A673 (cell line): ENCODE measurements at regions of chr19 and their contacts with region 1.

Region 1: GRCh38 chr19:45692187-45693105 is at the start of gene QPCTL:
- DNase-seq: peak; percentile 100
- H3K4me3 ChIP-seq: peak within 1 kb of the TSS; percentile 63
- H3K27ac ChIP-seq: peak within 1 kb of the TSS; percentile 88
- H3K4me1 ChIP-seq: peaks cover 9% of the 10 kb centered on the region
- H3K27me3 ChIP-seq: no peaks in the 10 kb centered on the region
- CTCF ChIP-seq: no peak
- total RNA-seq, gene QPCTL: 12.8 and 17.4 TPM in 2 replicates

Region 2: DNA sequence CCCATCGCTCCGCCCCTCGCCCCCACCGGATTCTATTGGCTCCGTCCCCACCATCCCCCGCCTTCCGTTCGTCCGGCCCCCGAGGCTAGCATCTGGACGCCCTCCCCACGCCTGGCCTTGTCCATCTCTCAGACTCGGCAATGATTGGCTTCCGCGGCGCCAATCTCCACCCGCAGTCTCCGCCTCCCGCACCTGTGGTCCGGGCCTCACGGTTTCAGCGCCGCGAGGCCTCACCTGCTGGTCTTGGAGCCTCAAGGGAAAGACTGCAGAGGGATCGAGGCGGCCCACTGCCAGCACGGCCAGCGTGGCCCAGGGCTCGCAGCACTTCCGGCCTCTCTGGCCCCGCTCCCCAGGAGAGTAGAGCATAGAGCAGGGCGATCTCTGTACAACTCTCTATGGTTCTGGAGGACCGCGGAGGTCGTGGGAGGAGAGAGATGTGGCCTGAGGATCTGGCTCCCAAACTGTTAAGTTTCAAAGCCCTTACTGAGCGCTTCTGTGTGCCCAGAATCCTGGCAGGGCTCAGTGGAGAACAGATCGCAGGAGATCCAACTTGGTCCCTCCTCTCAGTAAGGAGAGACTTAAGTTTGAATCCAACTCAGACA is 268.8 kb before region 1 on chr19 and contains the start of gene ERCC1:
- CTCF ChIA-PET with region 1: no interaction called
- POLR2A ChIA-PET with region 1: no interaction called
- intact Hi-C with region 1: loop called (anchors 5 kb)
- DNase-seq: peak; percentile 97
- H3K4me3 ChIP-seq: peak within 1 kb of the TSS; percentile 63
- H3K27ac ChIP-seq: peak within 1 kb of the TSS; percentile 89
- H3K4me1 ChIP-seq: peaks cover 16% of the 10 kb centered on the region
- H3K27me3 ChIP-seq: no peaks in the 10 kb centered on the region
- CTCF ChIP-seq: no peak
- total RNA-seq, gene ERCC1: 158 and 165 TPM in 2 replicates

Region 3: GRCh38 chr19:45478454-45479238 is 213.8 kb before region 1 on chr19:
- CTCF ChIA-PET with region 1: interaction called, 14 read pairs
- POLR2A ChIA-PET with region 1: no interaction called
- intact Hi-C with region 1: no loop called
- DNase-seq: peak; percentile 95
- H3K4me3 ChIP-seq: peak overlapping the region; percentile 51
- H3K27ac ChIP-seq: peak overlapping the region; percentile 95
- H3K4me1 ChIP-seq: peaks cover 5% of the 10 kb centered on the region
- H3K27me3 ChIP-seq: no peaks in the 10 kb centered on the region
- CTCF ChIP-seq: peak; percentile 96

Region 4: DNA sequence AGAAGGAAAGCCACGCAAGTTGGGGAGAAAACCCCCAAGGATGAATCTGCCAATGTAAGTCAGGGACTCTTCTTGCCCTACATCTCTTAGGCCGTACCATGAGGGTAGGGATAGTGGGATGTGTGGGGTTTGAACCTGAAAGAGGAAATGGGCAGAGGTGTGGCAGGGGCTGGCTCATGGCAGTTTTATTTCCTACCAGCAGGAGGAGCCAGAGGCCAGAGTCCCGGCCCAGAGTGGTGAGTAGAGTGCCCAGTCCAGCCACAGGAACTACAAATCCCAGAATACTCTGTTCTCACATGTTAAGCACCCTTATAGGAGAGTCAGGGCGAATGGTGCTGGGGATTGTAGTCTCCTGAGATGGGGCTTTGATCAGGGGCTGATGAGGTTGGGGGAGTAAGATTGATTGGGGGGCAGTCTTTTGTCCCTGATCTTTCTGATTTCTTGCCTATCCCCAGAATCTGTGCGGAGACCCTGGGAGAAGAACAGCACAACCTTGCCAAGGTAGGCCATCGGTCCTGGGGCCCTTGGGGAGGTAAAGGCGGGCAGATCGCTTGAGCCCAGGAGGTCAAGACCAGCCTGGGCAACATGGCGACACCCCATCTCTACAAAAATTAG is 168.7 kb before region 1 on chr19:
- CTCF ChIA-PET with region 1: no interaction called
- POLR2A ChIA-PET with region 1: no interaction called
- intact Hi-C with region 1: loop called (anchors 1 kb)
- DNase-seq: peak; percentile 93
- H3K4me3 ChIP-seq: no peak overlapping the region
- H3K27ac ChIP-seq: no peak overlapping the region
- H3K4me1 ChIP-seq: peaks cover 6% of the 10 kb centered on the region
- H3K27me3 ChIP-seq: no peaks in the 10 kb centered on the region
- CTCF ChIP-seq: peak; percentile 92

Region 5: DNA sequence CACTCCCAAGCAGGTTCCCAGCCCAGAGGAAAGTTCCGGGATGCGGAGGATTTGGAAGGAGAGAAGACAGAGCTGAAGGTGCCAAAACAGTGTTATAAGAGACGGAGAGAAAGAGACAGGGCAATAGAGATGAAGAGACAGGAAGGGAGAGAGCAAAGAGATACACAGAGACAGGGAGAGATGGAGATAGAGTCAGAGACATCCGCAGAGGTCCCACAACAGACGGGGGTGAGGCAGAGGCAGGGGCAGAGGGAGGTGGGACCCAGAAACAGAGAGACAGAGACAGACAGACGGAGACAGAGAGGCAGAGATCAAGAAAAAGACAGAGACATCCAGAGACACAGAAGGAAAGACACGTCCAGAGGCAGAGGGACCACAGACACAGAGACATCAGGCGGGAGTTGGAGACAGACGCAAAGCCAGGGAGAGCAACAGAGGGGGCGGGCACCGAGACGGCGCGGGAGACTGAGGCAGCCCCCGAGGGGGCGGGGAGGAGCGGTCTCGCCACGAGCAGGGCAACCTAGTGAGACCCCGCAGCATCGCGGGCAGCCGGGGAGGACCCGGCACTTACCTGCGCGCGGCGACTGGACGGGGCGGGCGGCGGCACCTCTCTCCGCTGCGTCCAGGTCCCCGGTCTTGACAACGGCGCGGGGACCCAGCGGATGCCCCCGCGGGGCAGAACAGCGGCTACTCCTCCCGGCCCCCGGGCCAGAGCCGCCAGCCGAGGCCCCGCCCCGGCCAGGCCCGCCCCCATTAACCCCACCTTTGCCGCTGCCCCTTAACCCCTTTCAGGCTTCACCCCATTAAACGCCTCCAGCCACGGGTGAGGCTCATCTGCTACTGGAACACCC is 90.7 kb before region 1 on chr19 and contains the start of gene GPR4:
- CTCF ChIA-PET with region 1: no interaction called
- POLR2A ChIA-PET with region 1: no interaction called
- intact Hi-C with region 1: loop called (anchors 5 kb)
- DNase-seq: no peak
- H3K4me3 ChIP-seq: no peak within 1 kb of the TSS
- H3K27ac ChIP-seq: no peak within 1 kb of the TSS
- H3K4me1 ChIP-seq: peaks cover 9% of the 10 kb centered on the region
- H3K27me3 ChIP-seq: peaks cover 59% of the 10 kb centered on the region
- CTCF ChIP-seq: no peak
- total RNA-seq, gene GPR4: not detected in 2 replicates

Region 6: DNA sequence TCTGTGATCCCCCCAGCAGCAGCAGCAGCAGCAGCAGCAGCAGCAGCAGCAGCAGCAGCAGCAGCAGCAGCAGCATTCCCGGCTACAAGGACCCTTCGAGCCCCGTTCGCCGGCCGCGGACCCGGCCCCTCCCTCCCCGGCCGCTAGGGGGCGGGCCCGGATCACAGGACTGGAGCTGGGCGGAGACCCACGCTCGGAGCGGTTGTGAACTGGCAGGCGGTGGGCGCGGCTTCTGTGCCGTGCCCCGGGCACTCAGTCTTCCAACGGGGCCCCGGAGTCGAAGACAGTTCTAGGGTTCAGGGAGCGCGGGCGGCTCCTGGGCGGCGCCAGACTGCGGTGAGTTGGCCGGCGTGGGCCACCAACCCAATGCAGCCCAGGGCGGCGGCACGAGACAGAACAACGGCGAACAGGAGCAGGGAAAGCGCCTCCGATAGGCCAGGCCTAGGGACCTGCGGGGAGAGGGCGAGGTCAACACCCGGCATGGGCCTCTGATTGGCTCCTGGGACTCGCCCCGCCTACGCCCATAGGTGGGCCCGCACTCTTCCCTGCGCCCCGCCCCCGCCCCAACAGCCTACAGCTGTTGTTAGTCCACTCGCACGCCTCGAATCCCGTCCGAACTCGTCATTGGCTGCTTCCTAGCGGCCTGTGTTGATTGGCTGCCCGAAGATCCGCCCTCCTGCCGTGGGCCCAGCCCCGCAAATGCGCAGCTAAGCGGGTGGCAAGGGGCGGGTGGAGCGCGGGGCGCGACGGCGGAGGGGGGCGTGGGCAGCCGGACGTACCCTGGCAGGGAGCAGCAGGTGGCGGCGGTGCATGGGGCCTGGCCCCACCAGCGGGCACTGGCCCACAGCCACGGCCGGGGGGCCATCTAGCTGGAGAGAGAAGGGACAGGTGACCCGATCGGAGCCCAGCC is 78.0 kb after region 1 on chr19:
- CTCF ChIA-PET with region 1: no interaction called
- POLR2A ChIA-PET with region 1: interaction called, 12 read pairs
- intact Hi-C with region 1: loop called (anchors 10 kb)
- DNase-seq: peak; percentile 99
- H3K4me3 ChIP-seq: peak overlapping the region; percentile 53
- H3K27ac ChIP-seq: peak overlapping the region; percentile 86
- H3K4me1 ChIP-seq: peaks cover 13% of the 10 kb centered on the region
- H3K27me3 ChIP-seq: no peaks in the 10 kb centered on the region
- CTCF ChIP-seq: peak; percentile 96

Region 7: GRCh38 chr19:46056536-46056935 is 364.1 kb after region 1 on chr19:
- CTCF ChIA-PET with region 1: no interaction called
- POLR2A ChIA-PET with region 1: no interaction called
- intact Hi-C with region 1: no loop called
- DNase-seq: no peak
- H3K4me3 ChIP-seq: no peak overlapping the region
- H3K27ac ChIP-seq: no peak overlapping the region
- H3K4me1 ChIP-seq: no peaks in the 10 kb centered on the region
- H3K27me3 ChIP-seq: peaks cover 61% of the 10 kb centered on the region
- CTCF ChIP-seq: no peak

Region 8: GRCh38 chr19:46691104-46691503 is 998.7 kb after region 1 on chr19:
- CTCF ChIA-PET with region 1: no interaction called
- POLR2A ChIA-PET with region 1: interaction called, 19 read pairs
- intact Hi-C with region 1: no loop called
- DNase-seq: no peak
- H3K4me3 ChIP-seq: no peak overlapping the region
- H3K27ac ChIP-seq: no peak overlapping the region
- H3K4me1 ChIP-seq: no peaks in the 10 kb centered on the region
- H3K27me3 ChIP-seq: no peaks in the 10 kb centered on the region
- CTCF ChIP-seq: no peak